Mammary epithelial cell (primary cell): ENCODE measurements at regions of chr16 and their contacts with region 1.

Region 1: DNA sequence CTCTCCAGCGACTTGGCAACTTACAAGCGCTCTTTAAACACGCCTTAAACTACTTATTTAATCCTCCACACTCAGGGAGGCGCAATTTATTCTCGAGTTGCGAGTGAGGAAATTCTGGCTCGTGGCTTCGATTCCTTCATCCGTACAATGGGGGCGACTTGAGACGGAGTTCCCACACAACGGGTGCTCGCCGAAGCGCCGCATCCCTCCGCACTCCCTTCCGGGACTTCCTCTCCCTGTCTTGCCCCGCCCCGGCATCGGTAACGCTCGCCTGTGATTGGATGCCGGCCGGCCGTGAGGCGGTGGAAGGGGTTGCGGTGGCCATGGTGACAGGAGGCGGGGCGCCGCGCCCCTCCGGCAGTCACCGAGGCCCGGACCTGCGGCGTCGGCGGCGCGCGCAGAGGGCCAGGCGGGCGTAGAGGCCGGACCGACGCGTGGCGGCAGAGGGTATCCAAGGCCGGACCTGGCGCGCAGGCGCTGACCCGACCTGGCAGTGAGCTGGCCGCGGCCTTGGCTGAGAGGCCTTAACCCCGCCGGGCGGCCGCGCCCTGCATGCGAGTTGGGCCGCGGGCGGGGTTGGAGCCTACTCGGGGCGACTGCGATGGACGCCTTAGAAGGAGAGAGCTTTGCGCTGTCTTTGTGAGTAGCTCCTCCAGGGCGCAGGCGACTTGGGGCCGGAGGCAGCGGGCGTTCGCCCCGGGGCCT is at the start of gene ARL2BP:
- DNase-seq: peak; percentile 98
- H3K4me3 ChIP-seq: peak within 1 kb of the TSS; percentile 73 to 77 (median 76)
- H3K27ac ChIP-seq: peak within 1 kb of the TSS; percentile 73
- H3K4me1 ChIP-seq: peaks cover 11% of the 10 kb centered on the region
- H3K27me3 ChIP-seq: no peaks in the 10 kb centered on the region
- CTCF ChIP-seq: peak in 1 of 2 donors; percentile 14
- total RNA-seq, gene ARL2BP: 70.2 to 82.4 TPM

Region 2: DNA sequence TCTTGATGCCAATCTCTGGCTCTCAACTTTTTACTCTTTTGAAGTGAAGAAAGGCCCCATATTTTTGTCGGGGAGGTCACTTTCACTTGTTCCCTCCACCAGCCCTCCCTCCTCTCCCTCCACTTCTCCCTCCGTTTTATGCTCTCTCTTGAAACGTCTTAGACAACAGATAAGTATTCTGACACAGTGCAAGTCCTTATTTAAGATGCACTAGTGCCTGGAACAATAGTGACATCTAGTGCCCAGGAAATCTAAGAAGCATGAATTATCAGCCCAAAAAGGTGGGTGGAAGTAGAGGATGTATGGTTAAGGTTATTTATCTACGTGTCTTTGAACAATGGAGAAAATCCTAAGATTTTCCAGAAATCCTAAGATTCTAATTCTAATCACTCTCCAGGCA is 77.0 kb before region 1 on chr16:
- CTCF ChIA-PET with region 1: no interaction called
- dilution Hi-C with region 1: no loop called
- in situ Hi-C with region 1: no loop called
- intact Hi-C with region 1: no loop called
- DNase-seq: peak; percentile 34
- H3K4me3 ChIP-seq: no peak overlapping the region
- H3K27ac ChIP-seq: no peak overlapping the region
- H3K4me1 ChIP-seq: no peaks in the 10 kb centered on the region
- H3K27me3 ChIP-seq: no peaks in the 10 kb centered on the region
- CTCF ChIP-seq: peak; percentile 34 to 58

Region 3: DNA sequence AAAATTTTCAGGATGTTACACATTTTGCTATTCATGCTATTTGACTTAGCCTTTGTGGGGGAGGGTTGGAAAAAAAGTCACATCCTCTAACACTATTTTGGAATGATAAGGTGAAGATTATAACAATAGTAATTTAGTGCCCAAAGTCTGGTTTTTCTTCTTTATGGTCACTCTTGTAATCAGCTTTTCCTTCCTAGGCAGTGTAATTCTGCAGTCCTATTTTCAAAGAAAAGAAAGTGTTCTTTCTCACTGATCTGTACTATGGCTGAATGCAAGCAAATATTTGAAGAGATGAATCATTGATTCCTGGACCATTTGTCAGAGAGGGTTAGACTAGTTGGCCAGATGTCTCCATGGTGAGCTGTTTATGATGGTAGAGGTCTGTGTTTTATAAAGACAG is 50.4 kb before region 1 on chr16:
- CTCF ChIA-PET with region 1: no interaction called
- dilution Hi-C with region 1: no loop called
- in situ Hi-C with region 1: no loop called
- intact Hi-C with region 1: loop called (anchors 2 kb)
- DNase-seq: peak; percentile 80
- H3K4me3 ChIP-seq: peak overlapping the region in 2 of 3 experiments; percentile 8 to 20
- H3K27ac ChIP-seq: peak overlapping the region; percentile 93
- H3K4me1 ChIP-seq: peaks cover 49% of the 10 kb centered on the region
- H3K27me3 ChIP-seq: no peaks in the 10 kb centered on the region
- CTCF ChIP-seq: no peak

Region 4: GRCh38 chr16:57260294-57260929 is 15.5 kb after region 1 on chr16:
- CTCF ChIA-PET with region 1: no interaction called
- dilution Hi-C with region 1: no loop called
- in situ Hi-C with region 1: no loop called
- intact Hi-C with region 1: no loop called
- DNase-seq: peak; percentile 84
- H3K4me3 ChIP-seq: no peak overlapping the region
- H3K27ac ChIP-seq: peak overlapping the region; percentile 54
- H3K4me1 ChIP-seq: peaks cover 47% of the 10 kb centered on the region
- H3K27me3 ChIP-seq: no peaks in the 10 kb centered on the region
- CTCF ChIP-seq: no peak

Region 5: GRCh38 chr16:57277586-57277985 is 32.7 kb after region 1 on chr16:
- CTCF ChIA-PET with region 1: no interaction called
- dilution Hi-C with region 1: no loop called
- in situ Hi-C with region 1: no loop called
- intact Hi-C with region 1: loop called (anchors 2 kb)
- DNase-seq: peak; percentile 96
- H3K4me3 ChIP-seq: no peak overlapping the region
- H3K27ac ChIP-seq: peak overlapping the region; percentile 80
- H3K4me1 ChIP-seq: peaks cover 36% of the 10 kb centered on the region
- H3K27me3 ChIP-seq: no peaks in the 10 kb centered on the region
- CTCF ChIP-seq: no peak

Region 6: GRCh38 chr16:57289391-57290257 is 44.7 kb after region 1 on chr16:
- CTCF ChIA-PET with region 1: no interaction called
- dilution Hi-C with region 1: no loop called
- in situ Hi-C with region 1: no loop called
- intact Hi-C with region 1: no loop called
- DNase-seq: peak; percentile 55
- H3K4me3 ChIP-seq: no peak overlapping the region
- H3K27ac ChIP-seq: no peak overlapping the region
- H3K4me1 ChIP-seq: peaks cover 5% of the 10 kb centered on the region
- H3K27me3 ChIP-seq: no peaks in the 10 kb centered on the region
- CTCF ChIP-seq: no peak

Region 7: DNA sequence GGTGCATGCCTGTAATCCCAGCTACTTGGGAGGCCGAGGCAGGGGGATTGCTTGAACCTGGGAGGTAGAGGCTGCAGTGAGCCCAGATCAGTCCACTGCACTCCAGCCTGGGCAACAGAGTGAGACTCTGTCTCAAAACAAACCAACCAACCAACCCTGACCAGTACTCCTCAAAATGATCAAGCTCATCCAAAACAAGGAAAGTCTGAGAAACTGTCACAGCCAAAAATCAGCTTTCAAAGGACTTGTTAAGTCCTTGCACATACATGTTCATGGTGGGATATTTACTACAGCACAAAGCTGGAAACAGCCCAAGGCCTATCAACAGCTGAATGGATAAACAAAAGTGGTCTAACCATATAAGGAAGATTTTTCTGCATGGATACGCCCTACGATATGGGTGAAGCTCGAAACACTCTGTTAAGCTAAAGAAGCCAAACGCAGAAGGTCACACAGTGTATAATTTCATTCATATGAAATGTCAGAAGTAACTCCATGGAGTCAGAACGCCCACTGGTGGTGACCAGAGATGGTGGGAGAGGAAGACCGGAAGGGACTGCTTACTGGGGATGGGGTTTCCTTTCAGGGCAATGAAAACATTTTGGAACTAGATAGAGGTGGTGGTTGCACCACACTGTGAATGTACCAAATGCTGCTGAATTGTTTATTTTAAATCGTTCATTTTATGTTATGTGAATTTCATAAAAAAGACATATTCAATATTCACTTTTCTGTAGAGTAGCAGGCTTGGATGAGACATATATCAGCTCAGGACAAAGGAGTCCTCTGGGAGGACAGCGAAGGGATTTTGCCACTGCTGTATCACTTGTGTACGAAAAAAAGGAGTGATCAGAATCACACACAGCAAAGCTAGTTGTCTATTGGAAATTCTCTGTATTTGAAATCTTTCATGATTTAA is 177.4 kb after region 1 on chr16:
- CTCF ChIA-PET with region 1: no interaction called
- dilution Hi-C with region 1: no loop called
- in situ Hi-C with region 1: no loop called
- intact Hi-C with region 1: loop called (anchors 1 kb)
- DNase-seq: peak; percentile 33
- H3K4me3 ChIP-seq: no peak overlapping the region
- H3K27ac ChIP-seq: no peak overlapping the region
- H3K4me1 ChIP-seq: peaks cover 12% of the 10 kb centered on the region
- H3K27me3 ChIP-seq: no peaks in the 10 kb centered on the region
- CTCF ChIP-seq: peak; percentile 69

Region 8: GRCh38 chr16:57648590-57649442 is 403.9 kb after region 1 on chr16:
- CTCF ChIA-PET with region 1: no interaction called
- dilution Hi-C with region 1: no loop called
- in situ Hi-C with region 1: no loop called
- intact Hi-C with region 1: no loop called
- DNase-seq: peak; percentile 70
- H3K4me3 ChIP-seq: no peak overlapping the region
- H3K27ac ChIP-seq: no peak overlapping the region
- H3K4me1 ChIP-seq: peaks cover 52% of the 10 kb centered on the region
- H3K27me3 ChIP-seq: no peaks in the 10 kb centered on the region
- CTCF ChIP-seq: peak; percentile 100